ENCODE measurements at regions of chr16 and their contacts with region 1.

Region 1: GRCh38 chr16:74522160-74522559 is 84.8 kb downstream of the GLG1 start:
- DNase-seq: no peak
- ATAC-seq: no peak
- H3K4me3 ChIP-seq: no peak overlapping the region
- H3K27ac ChIP-seq: no peak overlapping the region
- H3K4me1 ChIP-seq: no peaks in the 10 kb centered on the region
- H3K27me3 ChIP-seq: no peaks in the 10 kb centered on the region
- CTCF ChIP-seq: no peak

Region 2: DNA sequence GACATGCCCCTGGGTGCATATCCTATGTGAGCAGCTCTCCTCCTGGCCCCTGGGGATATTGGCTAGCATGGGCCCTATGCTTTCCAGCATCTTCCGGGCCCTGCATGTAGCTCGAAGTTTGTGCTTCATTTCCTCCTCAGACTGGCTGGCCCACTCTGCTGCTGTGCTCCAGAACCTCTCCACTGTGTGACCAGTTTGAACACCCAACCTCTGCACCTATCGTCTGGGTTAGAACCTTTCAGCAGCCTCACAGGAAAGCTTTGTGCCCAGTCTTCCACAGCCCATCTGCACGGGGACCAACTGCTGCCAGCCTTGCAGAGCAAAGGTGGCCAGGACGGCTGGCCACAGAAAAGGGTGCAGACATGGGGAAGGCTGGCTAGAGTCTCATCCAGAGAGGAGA is 90.6 kb before region 1 on chr16:
- CTCF ChIA-PET with region 1: interaction called, 15 read pairs
- POLR2A ChIA-PET with region 1: no interaction called
- in situ Hi-C with region 1: no loop called
- intact Hi-C with region 1: no loop called
- DNase-seq: no peak
- ATAC-seq: no peak; the same call in 1 of the 2 replicates
- H3K4me3 ChIP-seq: no peak overlapping the region
- H3K27ac ChIP-seq: no peak overlapping the region
- H3K4me1 ChIP-seq: no peaks in the 10 kb centered on the region
- H3K27me3 ChIP-seq: no peaks in the 10 kb centered on the region
- CTCF ChIP-seq: no peak